ENCODE measurements at regions of chr7 and their contacts with region 1.

Region 1: GRCh38 chr7:93693796-93694195 is 119.3 kb upstream of the CALCR start:
- DNase-seq: no peak
- H3K4me3 Mint-ChIP-seq: no peak overlapping the region
- H3K27ac Mint-ChIP-seq: no peak overlapping the region
- H3K4me1 Mint-ChIP-seq: no peaks in the 10 kb centered on the region
- H3K27me3 Mint-ChIP-seq: no peaks in the 10 kb centered on the region

Region 2: DNA sequence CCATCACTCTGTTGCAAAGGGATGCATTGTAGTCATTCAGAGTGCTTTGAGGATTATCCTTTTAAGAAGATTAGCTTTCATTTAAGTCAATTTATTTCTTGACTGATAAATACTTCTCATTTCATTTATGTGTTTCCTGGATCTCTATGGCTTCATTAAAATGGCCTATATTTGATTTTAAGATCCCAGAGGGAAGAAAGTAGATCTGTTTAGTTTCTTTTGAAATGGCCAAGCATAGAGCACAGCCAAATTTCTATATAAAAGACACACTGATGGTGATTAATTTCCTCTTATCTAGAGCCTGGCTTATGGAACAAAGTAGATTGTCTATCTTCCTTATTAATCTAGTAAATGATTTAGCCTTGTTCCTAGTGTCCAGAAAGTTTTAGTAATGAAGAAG is 10.4 kb after region 1 on chr7:
- intact Hi-C with region 1: loop called (anchors 1 kb)
- DNase-seq: no peak
- H3K4me3 Mint-ChIP-seq: no peak overlapping the region
- H3K27ac Mint-ChIP-seq: no peak overlapping the region
- H3K4me1 Mint-ChIP-seq: no peaks in the 10 kb centered on the region
- H3K27me3 Mint-ChIP-seq: no peaks in the 10 kb centered on the region